ENCODE measurements at regions of chr17 and their contacts with region 1.

Region 1: GRCh38 chr17:75749545-75750389 is 15.2 kb downstream of the GALK1 start:
- DNase-seq: peak; percentile 78 to 85 (median 80)
- H3K4me3 ChIP-seq: peak overlapping the region in 1 of 7 experiments; percentile 37
- H3K27ac ChIP-seq: no peak overlapping the region
- H3K4me1 ChIP-seq: peaks cover 0 to 22% (median 18%) of the 10 kb centered on the region in 4 experiments
- H3K27me3 ChIP-seq: no peaks in the 10 kb centered on the region

Region 2: GRCh38 chr17:75645889-75646637 is 103.7 kb before region 1 on chr17:
- CTCF ChIA-PET with region 1: interaction called, 23 read pairs
- POLR2A ChIA-PET with region 1: interaction called, 3 read pairs
- DNase-seq: peak; percentile 86 to 92 (median 87)
- H3K4me3 ChIP-seq: peak overlapping the region in 4 of 7 experiments; percentile 7 to 59 (median 40)
- H3K27ac ChIP-seq: peak overlapping the region; percentile 95 to 96
- H3K4me1 ChIP-seq: peaks cover 7 to 39% (median 24%) of the 10 kb centered on the region in 4 experiments
- H3K27me3 ChIP-seq: no peaks in the 10 kb centered on the region

Region 3: GRCh38 chr17:75679706-75680442 is 69.9 kb before region 1 on chr17:
- CTCF ChIA-PET with region 1: interaction called, 257 read pairs
- POLR2A ChIA-PET with region 1: interaction called, 3 read pairs
- DNase-seq: no peak
- H3K4me3 ChIP-seq: no peak overlapping the region
- H3K27ac ChIP-seq: no peak overlapping the region
- H3K4me1 ChIP-seq: peaks cover 0 to 2% (median 0%) of the 10 kb centered on the region in 4 experiments
- H3K27me3 ChIP-seq: no peaks in the 10 kb centered on the region

Region 4: DNA sequence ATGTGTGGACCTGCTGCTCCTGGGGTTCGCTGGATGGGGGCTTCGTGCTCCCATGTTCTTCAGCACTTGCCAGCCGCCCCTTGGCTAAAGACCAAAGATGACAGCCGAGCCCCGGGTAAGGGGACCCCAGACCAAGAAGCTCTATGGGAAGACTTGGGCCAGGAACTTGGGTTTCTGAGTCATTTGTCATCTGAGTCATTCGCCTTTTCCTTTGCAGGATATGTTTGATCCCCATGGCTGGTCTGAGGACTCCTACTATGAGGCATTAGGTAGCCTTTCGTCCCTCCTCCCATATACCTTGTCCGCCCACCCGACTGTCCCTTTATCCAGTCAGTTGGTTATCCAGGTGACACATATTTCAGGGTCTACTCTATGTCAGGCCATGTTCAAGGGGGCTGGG is 46.2 kb before region 1 on chr17:
- CTCF ChIA-PET with region 1: interaction called, 17 read pairs
- POLR2A ChIA-PET with region 1: interaction called, 3 read pairs
- DNase-seq: no peak
- H3K4me3 ChIP-seq: no peak overlapping the region
- H3K27ac ChIP-seq: no peak overlapping the region
- H3K4me1 ChIP-seq: peaks cover 0 to 26% (median 8%) of the 10 kb centered on the region in 4 experiments
- H3K27me3 ChIP-seq: no peaks in the 10 kb centered on the region

Region 5: GRCh38 chr17:75764711-75765421 is 15.1 kb after region 1 on chr17 and contains the start of gene GALK1:
- CTCF ChIA-PET with region 1: interaction called, 68 read pairs
- POLR2A ChIA-PET with region 1: interaction called, 5 read pairs
- DNase-seq: peak; percentile 69 to 80 (median 78)
- H3K4me3 ChIP-seq: peak within 1 kb of the TSS; percentile 55 to 86 (median 75)
- H3K27ac ChIP-seq: peak within 1 kb of the TSS in 1 of 2 experiments; percentile 61
- H3K4me1 ChIP-seq: peaks cover 0 to 19% (median 17%) of the 10 kb centered on the region in 4 experiments
- H3K27me3 ChIP-seq: no peaks in the 10 kb centered on the region